Activated CD4-positive, alpha-beta T cell treated with anti-CD3 and anti-CD28 coated beads, Interleukin-2, amount 10 ng/mL, durations not matched to agents 24 days and 14 days (primary cell): ENCODE measurements at regions of chr2 and their contacts with region 1.

Region 1: GRCh38 chr2:43169987-43170386 is 56.4 kb downstream of the ZFP36L2 start:
- DNase-seq: peak; percentile 90
- H3K4me3 Mint-ChIP-seq: peak overlapping the region; percentile 77
- H3K27ac Mint-ChIP-seq: peak overlapping the region; percentile 97
- H3K4me1 Mint-ChIP-seq: peaks cover 67% of the 10 kb centered on the region
- H3K27me3 Mint-ChIP-seq: no peaks in the 10 kb centered on the region

Region 2: DNA sequence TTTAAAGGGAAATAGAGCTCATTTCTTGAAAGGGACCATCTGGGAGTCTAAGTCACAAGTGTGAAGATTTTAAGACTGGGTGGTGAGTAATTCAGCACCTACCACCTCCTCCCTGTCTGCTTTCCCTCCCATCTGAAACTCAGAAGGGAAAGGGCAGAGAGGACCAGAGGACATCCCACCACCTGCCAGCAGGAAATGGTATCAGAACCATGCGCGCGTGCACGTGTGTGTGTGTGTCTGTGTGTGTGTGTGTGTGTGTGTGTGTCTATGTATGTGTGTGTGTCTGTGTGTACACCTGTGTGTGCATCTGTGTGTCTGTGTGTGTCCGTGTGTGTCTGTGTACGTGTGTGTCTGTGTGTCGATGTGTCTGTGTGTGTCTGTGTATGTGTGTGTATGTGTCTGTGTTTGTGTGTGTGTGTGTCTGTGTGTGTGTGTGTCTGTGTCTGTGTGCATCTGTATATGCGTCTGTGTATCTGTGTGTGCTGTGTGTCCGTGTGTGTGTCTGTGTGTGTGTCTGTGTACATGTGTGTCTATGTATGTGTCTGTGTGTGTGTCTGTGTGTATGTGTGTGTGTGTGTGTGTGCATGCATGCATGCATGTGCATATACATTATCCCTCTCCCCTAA is 20.4 kb before region 1 on chr2:
- intact Hi-C with region 1: loop called (anchors 2 kb)
- DNase-seq: peak; percentile 81
- H3K4me3 Mint-ChIP-seq: peak overlapping the region; percentile 67
- H3K27ac Mint-ChIP-seq: peak overlapping the region; percentile 91
- H3K4me1 Mint-ChIP-seq: peaks cover 51% of the 10 kb centered on the region
- H3K27me3 Mint-ChIP-seq: no peaks in the 10 kb centered on the region

Region 3: GRCh38 chr2:43158259-43158880 is 11.6 kb before region 1 on chr2:
- intact Hi-C with region 1: loop called (anchors 1 kb)
- DNase-seq: peak; percentile 89
- H3K4me3 Mint-ChIP-seq: peak overlapping the region; percentile 78
- H3K27ac Mint-ChIP-seq: peak overlapping the region; percentile 98
- H3K4me1 Mint-ChIP-seq: peaks cover 56% of the 10 kb centered on the region
- H3K27me3 Mint-ChIP-seq: no peaks in the 10 kb centered on the region

Region 4: DNA sequence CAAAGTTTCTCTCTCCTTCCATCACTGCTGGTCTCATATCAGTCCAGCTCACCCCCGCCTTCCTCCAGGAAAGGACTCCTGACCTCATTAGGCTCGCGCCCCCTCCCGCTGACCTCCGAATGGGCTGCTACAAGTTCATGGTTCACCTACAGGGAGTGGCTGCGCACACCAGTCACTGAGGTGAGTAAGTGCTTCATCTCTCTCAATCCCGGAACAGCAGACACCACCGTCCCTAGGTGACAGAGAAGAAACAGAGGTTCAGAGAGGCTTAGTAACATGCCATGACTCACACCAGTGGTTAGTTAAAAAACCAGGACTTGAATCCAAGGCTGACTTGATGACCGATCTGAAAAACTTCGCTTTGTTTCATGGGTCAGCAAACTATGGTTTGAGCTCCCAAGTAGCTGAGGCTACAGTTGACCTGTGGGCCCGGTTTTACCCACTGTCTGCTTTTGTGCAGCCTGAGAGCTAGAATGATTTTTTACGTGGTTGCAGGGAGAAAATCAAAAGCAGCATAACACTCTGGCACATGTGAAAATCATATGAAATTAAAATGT is 14.4 kb after region 1 on chr2:
- intact Hi-C with region 1: loop called (anchors 1 kb)
- DNase-seq: peak; percentile 86
- H3K4me3 Mint-ChIP-seq: peak overlapping the region; percentile 14
- H3K27ac Mint-ChIP-seq: peak overlapping the region; percentile 85
- H3K4me1 Mint-ChIP-seq: peaks cover 40% of the 10 kb centered on the region
- H3K27me3 Mint-ChIP-seq: no peaks in the 10 kb centered on the region

Region 5: GRCh38 chr2:43194121-43194869 is 24.3 kb after region 1 on chr2:
- intact Hi-C with region 1: loop called (anchors 1 kb)
- DNase-seq: no peak
- H3K4me3 Mint-ChIP-seq: peak overlapping the region; percentile 84
- H3K27ac Mint-ChIP-seq: peak overlapping the region; percentile 93
- H3K4me1 Mint-ChIP-seq: peaks cover 49% of the 10 kb centered on the region
- H3K27me3 Mint-ChIP-seq: no peaks in the 10 kb centered on the region

Region 6: GRCh38 chr2:43219383-43220228 is 49.6 kb after region 1 on chr2:
- intact Hi-C with region 1: loop called (anchors 1 kb)
- DNase-seq: peak; percentile 95
- H3K4me3 Mint-ChIP-seq: peak overlapping the region; percentile 84
- H3K27ac Mint-ChIP-seq: peak overlapping the region; percentile 96
- H3K4me1 Mint-ChIP-seq: peaks cover 48% of the 10 kb centered on the region
- H3K27me3 Mint-ChIP-seq: peaks cover 2% of the 10 kb centered on the region

Region 7: DNA sequence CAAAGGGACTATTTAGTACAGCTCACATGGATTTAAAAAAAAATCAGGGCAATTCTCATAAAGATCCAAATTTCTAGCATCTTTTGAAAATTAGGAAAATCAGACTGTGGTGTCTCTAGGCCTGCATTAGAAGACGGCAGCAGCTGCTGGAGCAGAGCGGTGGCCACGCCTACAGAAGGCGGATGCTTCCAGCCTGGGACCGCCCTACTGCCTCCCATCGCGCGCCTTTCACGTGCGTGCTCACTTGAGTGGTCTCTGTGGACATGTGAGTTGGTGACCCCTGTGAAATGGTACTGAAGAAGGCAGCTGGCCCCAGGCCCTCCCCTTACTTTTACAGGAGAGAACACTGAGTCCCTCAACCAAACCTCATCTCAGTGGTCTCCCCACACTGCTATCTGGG is 71.6 kb after region 1 on chr2:
- intact Hi-C with region 1: no loop called
- DNase-seq: no peak
- H3K4me3 Mint-ChIP-seq: no peak overlapping the region
- H3K27ac Mint-ChIP-seq: no peak overlapping the region
- H3K4me1 Mint-ChIP-seq: peaks cover 5% of the 10 kb centered on the region
- H3K27me3 Mint-ChIP-seq: no peaks in the 10 kb centered on the region

Region 8: GRCh38 chr2:43305517-43305916 is 135.5 kb after region 1 on chr2:
- intact Hi-C with region 1: no loop called
- DNase-seq: no peak
- H3K4me3 Mint-ChIP-seq: no peak overlapping the region
- H3K27ac Mint-ChIP-seq: no peak overlapping the region
- H3K4me1 Mint-ChIP-seq: peaks cover 26% of the 10 kb centered on the region
- H3K27me3 Mint-ChIP-seq: no peaks in the 10 kb centered on the region

Region 9: DNA sequence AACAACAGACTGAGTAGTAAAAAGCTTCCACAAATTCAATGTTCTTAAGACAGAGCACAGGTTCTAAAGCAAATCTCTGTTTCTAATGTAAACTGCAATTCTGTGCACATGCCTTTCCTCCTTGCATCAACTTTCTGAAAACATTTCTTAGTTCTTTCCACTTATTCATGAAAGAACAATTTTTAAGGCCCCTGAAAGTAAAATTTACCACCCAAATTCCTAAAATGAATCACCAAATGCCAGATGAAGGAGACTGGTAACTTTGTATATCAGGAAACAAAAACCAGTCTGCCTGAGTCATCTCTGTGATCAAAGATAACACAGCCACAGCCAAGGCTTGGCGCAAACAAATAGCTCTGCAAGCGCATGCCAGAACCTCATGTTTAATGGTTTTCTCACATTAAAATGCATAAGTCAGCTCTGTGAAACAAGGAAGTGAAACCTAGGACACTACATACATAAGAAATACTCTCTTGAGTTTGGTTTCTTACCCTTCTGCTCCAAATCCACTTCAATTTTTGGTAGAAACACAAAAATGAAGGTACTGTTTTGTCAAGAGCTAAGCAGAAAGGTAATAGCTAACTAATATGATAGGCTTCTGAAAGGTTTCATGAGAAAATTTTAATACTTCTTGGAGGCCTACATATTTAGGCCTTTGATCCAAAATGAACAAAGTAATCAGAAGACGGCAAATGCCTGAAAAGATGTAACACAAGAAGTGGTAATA is 256.5 kb after region 1 on chr2:
- intact Hi-C with region 1: loop called (anchors 1 kb)
- DNase-seq: peak; percentile 93
- H3K4me3 Mint-ChIP-seq: peak overlapping the region; percentile 25
- H3K27ac Mint-ChIP-seq: peak overlapping the region; percentile 49
- H3K4me1 Mint-ChIP-seq: peaks cover 41% of the 10 kb centered on the region
- H3K27me3 Mint-ChIP-seq: peaks cover 4% of the 10 kb centered on the region

Region 10: DNA sequence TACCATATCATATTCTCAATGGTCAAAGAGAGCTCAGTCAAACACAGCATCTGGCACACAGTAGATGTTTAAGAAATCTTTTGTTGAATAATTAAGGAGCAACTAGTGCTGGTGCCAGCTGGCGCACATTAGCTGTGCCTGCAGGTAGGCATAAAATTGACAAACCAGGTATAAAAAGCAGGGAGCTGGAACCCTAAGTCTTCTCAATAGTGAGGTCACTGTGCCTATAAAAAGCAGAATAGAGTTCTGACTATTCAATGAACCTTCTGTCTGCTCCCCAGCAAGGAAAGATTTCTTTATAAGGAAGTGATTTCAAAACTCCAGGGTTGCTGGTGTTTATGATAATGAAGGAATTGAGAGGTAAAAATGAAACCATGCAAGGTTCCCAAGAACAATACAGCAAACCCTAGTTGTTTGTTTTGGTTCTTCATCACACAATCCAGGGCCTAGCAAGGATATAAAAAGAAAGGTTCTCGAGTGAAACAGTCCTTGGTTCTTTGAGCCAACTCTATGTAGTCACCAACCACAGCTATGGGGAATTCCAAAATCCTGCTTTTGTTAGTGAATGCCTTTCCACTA is 349.7 kb after region 1 on chr2:
- intact Hi-C with region 1: no loop called
- DNase-seq: no peak
- H3K4me3 Mint-ChIP-seq: no peak overlapping the region
- H3K27ac Mint-ChIP-seq: peak overlapping the region; percentile 45
- H3K4me1 Mint-ChIP-seq: peaks cover 14% of the 10 kb centered on the region
- H3K27me3 Mint-ChIP-seq: no peaks in the 10 kb centered on the region